Endothelial cell of umbilical vein (primary cell): ENCODE measurements at regions of chr1 and their contacts with region 1.

Region 1: GRCh38 chr1:225962440-225962975 is 21.5 kb upstream of the LEFTY2 start:
- DNase-seq: peak; percentile 35
- H3K4me3 ChIP-seq: no peak overlapping the region
- H3K27ac ChIP-seq: no peak overlapping the region
- H3K4me1 ChIP-seq: no peaks in the 10 kb centered on the region
- H3K27me3 ChIP-seq: peaks cover 0 to 5% of the 10 kb centered on the region in 2 experiments
- CTCF ChIP-seq: peak; percentile 78 to 90
- POLR2A ChIP-seq: no peak

Region 2: DNA sequence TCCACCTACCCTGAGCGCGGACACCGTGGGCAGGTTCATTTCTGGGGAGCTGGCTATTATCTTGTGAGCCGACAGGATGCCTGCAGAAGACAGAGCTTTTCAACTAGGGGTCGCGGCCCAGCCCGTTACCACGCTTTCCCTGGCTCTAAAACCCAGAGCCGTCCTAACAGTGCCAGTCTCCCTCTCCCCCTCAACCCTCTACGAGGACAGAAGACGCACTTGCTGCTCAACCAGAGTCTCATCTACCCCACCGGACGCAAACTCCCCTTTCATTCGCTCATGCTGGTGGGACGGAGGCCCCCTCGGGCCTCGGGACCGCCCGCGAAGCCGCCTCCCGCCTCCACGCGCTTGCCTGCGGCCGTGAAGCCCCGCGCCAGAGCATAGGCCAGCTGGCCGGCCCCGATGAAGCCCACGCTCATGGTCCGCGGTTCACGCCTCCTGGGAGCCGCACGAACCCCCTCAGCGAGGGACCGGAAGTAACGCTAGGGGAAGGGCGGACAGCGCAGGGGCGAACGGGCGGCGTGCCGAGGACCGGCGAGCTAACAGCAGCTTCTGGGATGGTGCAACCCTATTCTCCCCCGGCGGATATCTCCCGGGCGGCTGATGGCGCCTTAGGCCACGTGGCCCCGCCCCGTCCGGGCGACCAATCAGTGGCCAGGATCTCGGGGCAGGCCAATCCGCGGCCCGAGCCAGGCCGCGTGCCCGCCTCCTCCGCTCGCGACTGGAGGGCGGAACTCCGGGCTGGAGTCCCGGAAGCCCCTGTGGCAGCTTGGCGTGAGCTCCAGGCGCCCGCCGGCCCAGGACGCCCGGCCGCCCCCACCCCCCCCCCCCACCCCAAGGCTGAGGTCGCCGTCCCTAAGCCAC is 38.6 kb before region 1 on chr1 and contains the start of gene PYCR2:
- CTCF ChIA-PET with region 1: interaction called, 6 read pairs
- POLR2A ChIA-PET with region 1: no interaction called
- dilution Hi-C with region 1: no loop called
- intact Hi-C with region 1: loop called (anchors 1 kb)
- DNase-seq: peak; percentile 97
- H3K4me3 ChIP-seq: peak within 1 kb of the TSS; percentile 15 to 69 (median 59)
- H3K27ac ChIP-seq: peak within 1 kb of the TSS; percentile 69
- H3K4me1 ChIP-seq: peaks cover 19% of the 10 kb centered on the region
- H3K27me3 ChIP-seq: no peaks in the 10 kb centered on the region
- CTCF ChIP-seq: no peak
- POLR2A ChIP-seq: peak; percentile 94
- total RNA-seq, gene PYCR2: 60.4 and 64.6 TPM in 2 replicates

Region 3: GRCh38 chr1:225944951-225945350 is 17.6 kb before region 1 on chr1:
- CTCF ChIA-PET with region 1: interaction called, 10 read pairs
- POLR2A ChIA-PET with region 1: no interaction called
- dilution Hi-C with region 1: no loop called
- intact Hi-C with region 1: no loop called
- DNase-seq: no peak
- H3K4me3 ChIP-seq: no peak overlapping the region
- H3K27ac ChIP-seq: no peak overlapping the region
- H3K4me1 ChIP-seq: no peaks in the 10 kb centered on the region
- H3K27me3 ChIP-seq: peaks cover 4 to 9% of the 10 kb centered on the region in 2 experiments
- CTCF ChIP-seq: no peak
- POLR2A ChIP-seq: no peak